ENCODE measurements at regions of chr11 and their contacts with region 1.

Region 1: GRCh38 chr11:33970984-33971466 is 79.1 kb upstream of the LMO2 start:
- DNase-seq: peak; percentile 65 to 70
- H3K4me3 ChIP-seq: no peak overlapping the region
- H3K4me3 Mint-ChIP-seq: no peak overlapping the region
- H3K27ac Mint-ChIP-seq: no peak overlapping the region
- H3K4me1 ChIP-seq: no peaks in the 10 kb centered on the region
- H3K4me1 Mint-ChIP-seq: no peaks in the 10 kb centered on the region
- H3K27me3 ChIP-seq: no peaks in the 10 kb centered on the region
- H3K27me3 Mint-ChIP-seq: peaks cover 14% of the 10 kb centered on the region
- CTCF ChIP-seq: peak; percentile 60 to 75

Region 2: GRCh38 chr11:33835143-33835878 is 135.7 kb before region 1 on chr11:
- CTCF ChIA-PET with region 1: no interaction called
- POLR2A ChIA-PET with region 1: no interaction called
- intact Hi-C with region 1: loop called (anchors 1 kb)
- DNase-seq: no peak
- H3K4me3 ChIP-seq: no peak overlapping the region
- H3K4me3 Mint-ChIP-seq: no peak overlapping the region
- H3K27ac Mint-ChIP-seq: no peak overlapping the region
- H3K4me1 ChIP-seq: no peaks in the 10 kb centered on the region
- H3K4me1 Mint-ChIP-seq: no peaks in the 10 kb centered on the region
- H3K27me3 ChIP-seq: peaks cover 2% of the 10 kb centered on the region
- H3K27me3 Mint-ChIP-seq: peaks cover 16% of the 10 kb centered on the region
- CTCF ChIP-seq: peak; percentile 19 to 23

Region 3: DNA sequence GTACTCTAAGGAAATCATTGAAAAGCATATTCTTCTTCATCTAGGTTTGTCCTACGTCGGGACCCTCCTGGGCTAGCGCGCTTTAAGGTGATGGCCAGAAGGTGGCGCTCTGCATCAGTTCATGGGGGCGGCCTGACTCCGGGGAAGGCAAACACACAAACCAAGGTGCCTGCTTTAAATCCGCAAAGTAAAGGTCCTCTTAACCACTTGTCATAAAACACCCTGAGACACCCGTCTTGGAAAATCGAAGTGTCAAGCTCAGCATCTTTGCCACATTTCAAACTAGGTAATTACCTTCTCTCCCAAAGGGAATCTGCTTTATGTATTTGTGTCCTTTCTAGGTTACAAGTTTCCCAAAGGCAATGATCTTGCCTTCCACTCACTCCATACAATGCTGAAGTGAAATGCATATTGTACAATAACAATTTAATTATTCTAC is 113.1 kb before region 1 on chr11:
- CTCF ChIA-PET with region 1: interaction called, 7 read pairs
- POLR2A ChIA-PET with region 1: no interaction called
- intact Hi-C with region 1: loop called (anchors 1 kb)
- DNase-seq: peak; percentile 60 to 77
- H3K4me3 ChIP-seq: no peak overlapping the region
- H3K4me3 Mint-ChIP-seq: no peak overlapping the region
- H3K27ac Mint-ChIP-seq: no peak overlapping the region
- H3K4me1 ChIP-seq: no peaks in the 10 kb centered on the region
- H3K4me1 Mint-ChIP-seq: no peaks in the 10 kb centered on the region
- H3K27me3 ChIP-seq: peaks cover 4% of the 10 kb centered on the region; the same call in 1 of the 2 replicates
- H3K27me3 Mint-ChIP-seq: peaks cover 39% of the 10 kb centered on the region
- CTCF ChIP-seq: peak; percentile 88 to 91